ENCODE measurements at regions of chr11 and their contacts with region 1.

Region 1: GRCh38 chr11:113289431-113290187 is 24.8 kb upstream of the TTC12 start:
- DNase-seq: peak; percentile 22 to 69 (median 51)
- ATAC-seq: peak; percentile 90
- H3K4me3 ChIP-seq: no peak overlapping the region
- H3K4me3 Mint-ChIP-seq: no peak overlapping the region
- H3K27ac ChIP-seq: no peak overlapping the region
- H3K27ac Mint-ChIP-seq: no peak overlapping the region
- H3K4me1 ChIP-seq: no peaks in the 10 kb centered on the region
- H3K4me1 Mint-ChIP-seq: no peaks in the 10 kb centered on the region
- H3K27me3 ChIP-seq: no peaks in the 10 kb centered on the region
- H3K27me3 Mint-ChIP-seq: peaks cover 0 to 12% (median 8%) of the 10 kb centered on the region in 5 donors

Region 2: GRCh38 chr11:112113539-112114457 is 1175.8 kb before region 1 on chr11:
- CTCF ChIA-PET with region 1: no interaction called
- POLR2A ChIA-PET with region 1: no interaction called
- intact Hi-C with region 1: loop called in 1 of 2 experiments (anchors 2 kb)
- DNase-seq: peak in 6 of 9 donors; percentile 17 to 46 (median 30)
- ATAC-seq: peak; percentile 76
- H3K4me3 ChIP-seq: no peak overlapping the region
- H3K4me3 Mint-ChIP-seq: peak overlapping the region in 1 of 10 donors; percentile 4
- H3K27ac ChIP-seq: no peak overlapping the region
- H3K27ac Mint-ChIP-seq: no peak overlapping the region
- H3K4me1 ChIP-seq: no peaks in the 10 kb centered on the region
- H3K4me1 Mint-ChIP-seq: peaks cover 0 to 21% (median 8%) of the 10 kb centered on the region in 7 donors
- H3K27me3 ChIP-seq: no peaks in the 10 kb centered on the region
- H3K27me3 Mint-ChIP-seq: no peaks in the 10 kb centered on the region

Region 3: DNA sequence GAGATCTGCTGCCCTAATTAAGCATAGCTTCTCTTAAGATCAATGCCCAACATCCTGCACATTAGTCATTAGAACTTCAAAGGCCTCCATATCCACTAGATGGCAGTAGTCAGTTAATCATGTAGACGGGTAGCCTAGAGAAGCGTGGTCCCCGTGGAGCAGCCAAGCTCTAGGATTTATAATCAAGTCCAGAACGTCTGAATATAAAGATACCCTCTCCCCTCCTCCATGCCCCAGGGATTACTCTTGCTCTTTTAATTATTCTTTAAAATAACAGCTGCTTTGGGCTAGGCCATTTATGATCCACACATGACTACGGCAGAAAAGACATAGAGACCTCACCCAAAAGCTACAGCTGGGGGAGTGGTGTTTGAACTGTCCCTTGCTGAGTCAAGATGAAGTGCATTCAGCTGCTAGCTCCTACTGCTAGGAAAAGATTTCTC is 701.3 kb before region 1 on chr11:
- CTCF ChIA-PET with region 1: interaction called, 10 read pairs
- POLR2A ChIA-PET with region 1: no interaction called
- intact Hi-C with region 1: loop called (anchors 1 kb)
- DNase-seq: peak in 7 of 9 donors; percentile 21 to 53 (median 48)
- ATAC-seq: peak; percentile 78
- H3K4me3 ChIP-seq: no peak overlapping the region
- H3K4me3 Mint-ChIP-seq: peak overlapping the region in 4 of 10 donors; percentile 11 to 71 (median 46)
- H3K27ac ChIP-seq: no peak overlapping the region
- H3K27ac Mint-ChIP-seq: no peak overlapping the region
- H3K4me1 ChIP-seq: no peaks in the 10 kb centered on the region
- H3K4me1 Mint-ChIP-seq: peaks cover 0 to 6% (median 0%) of the 10 kb centered on the region in 7 donors
- H3K27me3 ChIP-seq: no peaks in the 10 kb centered on the region
- H3K27me3 Mint-ChIP-seq: peaks cover 0 to 5% (median 3%) of the 10 kb centered on the region in 5 donors

Measured in naive thymus-derived CD4-positive, alpha-beta T cell (primary cell).